Left colon (tissue), 2 donors: ENCODE measurements at regions of chr3 and their contacts with region 1.

Region 1: DNA sequence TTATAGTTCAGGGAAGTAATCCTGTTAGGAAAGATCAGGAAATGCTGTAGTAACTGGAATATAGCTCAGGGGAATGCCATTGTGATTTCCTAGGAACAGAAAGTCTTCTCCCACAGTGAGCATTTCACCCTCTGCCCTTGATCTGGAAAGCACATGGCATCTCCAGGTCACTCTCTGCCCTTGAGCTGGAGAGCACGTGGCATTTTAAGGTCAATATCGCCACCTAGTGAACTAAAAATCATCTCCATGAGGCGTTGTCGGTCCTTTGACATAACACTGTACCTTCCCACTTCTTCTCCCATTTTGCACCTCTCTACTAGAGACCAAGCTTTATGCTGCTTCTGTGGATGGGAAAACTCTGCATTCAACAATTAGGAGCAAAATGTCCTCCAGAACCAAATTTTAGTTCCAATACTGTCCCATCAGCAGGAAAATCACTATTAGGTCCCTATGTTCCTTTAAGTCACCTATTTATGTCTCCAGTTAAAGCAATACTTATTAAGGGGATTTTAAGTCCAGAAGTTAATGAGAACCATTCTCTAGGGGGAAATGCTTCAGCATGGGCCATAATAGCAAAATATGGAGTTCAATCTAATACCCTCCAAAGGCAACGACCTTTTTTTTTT is 54.7 kb upstream of the GK5 start:
- DNase-seq: peak; percentile 27 to 41
- ATAC-seq: peak; percentile 99

Region 2: DNA sequence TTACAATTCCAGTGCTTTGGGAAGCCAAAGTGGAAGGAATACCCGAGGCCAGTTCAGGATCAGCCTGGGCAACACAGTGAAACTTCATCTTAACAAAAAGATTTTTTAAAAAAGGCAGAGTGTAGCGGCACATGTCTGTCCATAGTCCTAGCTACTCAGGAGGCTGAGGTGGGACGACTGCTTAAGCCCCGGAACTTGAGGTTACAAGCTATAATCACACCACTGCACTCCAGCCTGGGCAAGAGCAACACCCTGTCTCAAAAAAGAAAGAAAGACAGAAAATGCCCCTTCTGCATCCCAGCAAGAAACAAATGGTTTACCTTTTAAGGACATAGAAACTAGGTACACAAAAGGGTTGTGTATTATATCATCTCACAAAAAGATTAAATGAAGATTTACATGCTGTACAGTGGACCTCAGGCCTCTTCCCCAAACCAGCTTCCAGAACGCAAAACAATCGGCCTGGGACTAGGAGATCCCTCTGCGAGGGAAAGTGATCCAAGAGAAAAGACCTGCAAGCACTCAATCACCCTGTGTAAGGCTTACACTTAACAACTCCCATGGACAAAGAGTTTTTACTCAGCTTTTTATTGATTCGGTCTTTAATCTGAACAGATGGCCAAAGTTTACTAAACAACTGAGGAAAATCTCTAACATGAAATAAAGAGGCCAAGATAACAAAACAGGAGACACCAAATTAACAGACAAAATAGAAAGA is 152.0 kb before region 1 on chr3:
- intact Hi-C with region 1: loop called in 1 of 2 experiments (anchors 2 kb)
- DNase-seq: no peak
- ATAC-seq: no peak

Region 3: DNA sequence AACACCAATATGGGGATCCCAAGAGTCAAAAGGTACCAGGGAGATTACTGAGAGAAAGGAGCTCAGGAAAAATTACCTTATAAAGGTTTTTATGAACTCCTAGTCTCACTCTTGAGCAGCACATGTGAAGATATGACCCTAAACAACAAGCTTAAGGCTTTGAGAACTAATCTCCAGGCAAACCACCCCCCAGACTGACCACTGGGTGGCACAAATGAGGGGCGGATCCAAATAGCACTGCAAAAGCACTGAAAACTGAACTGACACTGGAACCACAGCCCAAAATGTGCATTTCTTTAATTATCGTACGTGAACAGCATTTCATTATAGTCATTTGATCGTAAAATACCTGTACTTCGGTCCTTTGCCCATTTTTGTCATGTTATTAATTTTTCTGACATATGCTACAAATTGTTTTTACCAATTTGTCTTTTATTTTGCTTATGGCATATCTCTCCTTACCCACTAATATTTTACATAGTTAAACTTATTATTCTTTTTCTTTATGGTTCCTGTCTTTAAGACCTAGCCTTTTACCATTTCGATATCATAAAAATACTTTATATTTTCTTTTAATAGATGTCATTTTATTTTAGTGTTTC is 99.2 kb before region 1 on chr3:
- intact Hi-C with region 1: loop called in 1 of 2 experiments (anchors 10 kb)
- DNase-seq: peak in 1 of 2 donors; percentile 24
- ATAC-seq: peak; percentile 59

Region 4: GRCh38 chr3:142447852-142448823 is 168.1 kb after region 1 on chr3 and contains the start of gene XRN1:
- intact Hi-C with region 1: no loop called
- DNase-seq: peak; percentile 93 to 97
- ATAC-seq: peak; percentile 90
- total RNA-seq, gene XRN1: 46.1 to 46.9 TPM

Region 5: GRCh38 chr3:142904639-142905436 is 624.8 kb after region 1 on chr3:
- intact Hi-C with region 1: no loop called
- DNase-seq: peak; percentile 31 to 53
- ATAC-seq: peak; percentile 100